CD4-positive, alpha-beta T cell (primary cell): ENCODE measurements at regions of chr5 and their contacts with region 1.

Region 1: GRCh38 chr5:96934708-96935558 is 947 bp upstream of the LNPEP start:
- DNase-seq: peak; percentile 86 to 98 (median 94)
- ATAC-seq: peak; percentile 63
- H3K4me3 ChIP-seq: peak overlapping the region; percentile 74
- H3K4me3 Mint-ChIP-seq: peak overlapping the region; percentile 94
- H3K27ac ChIP-seq: peak overlapping the region; percentile 83 to 94
- H3K27ac Mint-ChIP-seq: peak overlapping the region; percentile 96
- H3K4me1 ChIP-seq: peaks cover 32% of the 10 kb centered on the region
- H3K4me1 Mint-ChIP-seq: peaks cover 73% of the 10 kb centered on the region
- H3K27me3 ChIP-seq: no peaks in the 10 kb centered on the region
- H3K27me3 Mint-ChIP-seq: no peaks in the 10 kb centered on the region
- CTCF ChIP-seq: no peak

Region 2: GRCh38 chr5:96876292-96876850 is 58.6 kb before region 1 on chr5 and contains the start of gene ERAP2:
- CTCF ChIA-PET with region 1: interaction called, 6 read pairs
- POLR2A ChIA-PET with region 1: interaction called, 39 read pairs
- intact Hi-C with region 1: loop called (anchors 2 kb)
- DNase-seq: peak in 5 of 14 experiments; percentile 13 to 81 (median 75)
- ATAC-seq: peak; percentile 77
- H3K4me3 ChIP-seq: peak within 1 kb of the TSS; percentile 91
- H3K4me3 Mint-ChIP-seq: peak within 1 kb of the TSS; percentile 98
- H3K27ac ChIP-seq: peak within 1 kb of the TSS; percentile 83 to 90
- H3K27ac Mint-ChIP-seq: peak within 1 kb of the TSS; percentile 92
- H3K4me1 ChIP-seq: peaks cover 46% of the 10 kb centered on the region
- H3K4me1 Mint-ChIP-seq: peaks cover 81% of the 10 kb centered on the region
- H3K27me3 ChIP-seq: no peaks in the 10 kb centered on the region
- H3K27me3 Mint-ChIP-seq: no peaks in the 10 kb centered on the region
- CTCF ChIP-seq: no peak
- total RNA-seq, gene ERAP2: 56.6 to 61.4 TPM

Region 3: DNA sequence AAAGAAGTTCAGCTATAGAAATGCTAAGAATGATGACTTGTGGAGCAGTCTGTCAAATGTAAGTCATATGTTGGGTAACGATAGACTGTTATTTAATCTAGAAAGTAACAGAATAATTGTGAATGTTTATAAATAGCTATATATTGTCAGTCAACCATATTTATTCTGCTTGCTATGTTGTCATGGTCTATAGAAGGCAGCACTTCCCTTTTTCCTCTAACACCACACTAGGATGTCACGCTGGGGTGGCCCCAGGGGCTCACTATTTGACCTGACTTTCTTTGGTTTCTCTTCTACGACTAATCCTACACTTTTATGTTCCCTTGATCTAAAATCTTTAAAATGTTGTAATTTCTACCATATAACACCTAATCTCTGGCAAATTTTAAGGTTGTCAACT is 38.1 kb before region 1 on chr5:
- CTCF ChIA-PET with region 1: interaction called, 3 read pairs
- POLR2A ChIA-PET with region 1: interaction called, 19 read pairs
- intact Hi-C with region 1: loop called in 1 of 2 experiments (anchors 5 kb)
- DNase-seq: peak in 3 of 14 experiments; percentile 41 to 52 (median 46)
- ATAC-seq: peak; percentile 32
- H3K4me3 ChIP-seq: peak overlapping the region; percentile 33
- H3K4me3 Mint-ChIP-seq: peak overlapping the region; percentile 83
- H3K27ac ChIP-seq: peak overlapping the region; percentile 78 to 79
- H3K27ac Mint-ChIP-seq: peak overlapping the region; percentile 91
- H3K4me1 ChIP-seq: peaks cover 8% of the 10 kb centered on the region
- H3K4me1 Mint-ChIP-seq: peaks cover 53% of the 10 kb centered on the region
- H3K27me3 ChIP-seq: no peaks in the 10 kb centered on the region
- H3K27me3 Mint-ChIP-seq: no peaks in the 10 kb centered on the region
- CTCF ChIP-seq: no peak

Region 4: DNA sequence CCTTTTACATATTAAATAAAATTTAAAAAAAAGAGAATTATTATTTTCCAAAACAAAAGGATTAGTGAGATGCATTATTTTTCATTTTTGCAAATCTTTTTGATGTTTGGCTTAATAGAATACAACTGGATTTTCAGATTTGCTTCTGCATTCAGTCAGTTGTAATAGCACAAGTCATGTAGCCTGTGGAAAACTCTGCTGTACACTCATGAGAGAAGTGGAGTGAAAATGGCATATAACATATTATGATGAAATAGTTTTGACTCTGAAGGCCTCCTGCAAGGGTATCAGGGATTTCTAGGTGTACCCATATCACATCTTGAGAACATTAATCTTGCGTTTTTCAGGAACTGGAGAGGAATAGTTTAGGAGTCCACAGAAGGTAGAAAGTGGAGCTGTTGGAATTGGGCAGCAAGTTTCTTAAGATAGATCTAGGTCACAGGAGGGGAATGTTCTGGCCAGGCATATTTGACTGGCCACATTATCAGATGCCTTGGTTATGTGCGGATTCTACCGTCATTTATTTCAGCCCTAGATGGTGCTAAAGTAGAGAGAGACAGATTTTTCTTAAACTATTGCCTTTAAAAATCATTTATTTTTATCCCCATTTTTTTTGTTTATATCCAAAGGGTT is 17.3 kb after region 1 on chr5:
- CTCF ChIA-PET with region 1: interaction called, 4 read pairs
- POLR2A ChIA-PET with region 1: interaction called, 23 read pairs
- intact Hi-C with region 1: loop called in 1 of 2 experiments (anchors 1 kb)
- DNase-seq: no peak
- ATAC-seq: no peak
- H3K4me3 ChIP-seq: no peak overlapping the region
- H3K4me3 Mint-ChIP-seq: no peak overlapping the region
- H3K27ac ChIP-seq: no peak overlapping the region
- H3K27ac Mint-ChIP-seq: peak overlapping the region; percentile 66
- H3K4me1 ChIP-seq: peaks cover 19% of the 10 kb centered on the region
- H3K4me1 Mint-ChIP-seq: peaks cover 76% of the 10 kb centered on the region
- H3K27me3 ChIP-seq: no peaks in the 10 kb centered on the region
- H3K27me3 Mint-ChIP-seq: no peaks in the 10 kb centered on the region
- CTCF ChIP-seq: no peak

Region 5: DNA sequence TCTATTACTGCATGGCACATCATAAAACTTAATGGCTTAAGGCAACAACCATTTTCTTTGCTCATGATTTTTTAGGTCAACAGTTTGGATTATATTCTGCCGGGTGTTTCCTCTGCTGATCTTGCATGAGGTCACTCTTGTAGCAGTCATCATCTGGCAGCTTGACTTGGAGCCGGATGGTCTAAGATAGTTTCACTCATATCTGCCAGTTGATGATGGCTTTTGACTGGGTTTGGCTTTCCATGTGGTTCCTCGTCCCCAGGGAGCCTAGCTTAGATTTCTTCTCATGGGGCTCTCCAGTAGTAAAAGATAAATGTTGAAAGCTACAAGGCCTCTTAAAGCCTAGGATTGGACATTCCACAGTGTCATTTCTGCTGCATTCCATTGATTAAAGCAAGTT is 28.3 kb after region 1 on chr5:
- CTCF ChIA-PET with region 1: interaction called, 7 read pairs
- POLR2A ChIA-PET with region 1: interaction called, 59 read pairs
- intact Hi-C with region 1: loop called in 1 of 2 experiments (anchors 1 kb)
- DNase-seq: peak in 4 of 14 experiments; percentile 32 to 54 (median 40)
- ATAC-seq: peak; percentile 32
- H3K4me3 ChIP-seq: no peak overlapping the region
- H3K4me3 Mint-ChIP-seq: peak overlapping the region; percentile 81
- H3K27ac ChIP-seq: peak overlapping the region; percentile 68 to 70
- H3K27ac Mint-ChIP-seq: peak overlapping the region; percentile 91
- H3K4me1 ChIP-seq: peaks cover 38% of the 10 kb centered on the region
- H3K4me1 Mint-ChIP-seq: peaks cover 94% of the 10 kb centered on the region
- H3K27me3 ChIP-seq: no peaks in the 10 kb centered on the region
- H3K27me3 Mint-ChIP-seq: no peaks in the 10 kb centered on the region
- CTCF ChIP-seq: no peak

Region 6: GRCh38 chr5:96984506-96985192 is 49.7 kb after region 1 on chr5:
- CTCF ChIA-PET with region 1: interaction called, 4 read pairs
- POLR2A ChIA-PET with region 1: interaction called, 23 read pairs
- intact Hi-C with region 1: loop called in 1 of 2 experiments (anchors 5 kb)
- DNase-seq: no peak
- ATAC-seq: no peak
- H3K4me3 ChIP-seq: no peak overlapping the region
- H3K4me3 Mint-ChIP-seq: no peak overlapping the region
- H3K27ac ChIP-seq: no peak overlapping the region
- H3K27ac Mint-ChIP-seq: no peak overlapping the region
- H3K4me1 ChIP-seq: peaks cover 3% of the 10 kb centered on the region
- H3K4me1 Mint-ChIP-seq: peaks cover 55% of the 10 kb centered on the region
- H3K27me3 ChIP-seq: no peaks in the 10 kb centered on the region
- H3K27me3 Mint-ChIP-seq: no peaks in the 10 kb centered on the region
- CTCF ChIP-seq: no peak

Region 7: DNA sequence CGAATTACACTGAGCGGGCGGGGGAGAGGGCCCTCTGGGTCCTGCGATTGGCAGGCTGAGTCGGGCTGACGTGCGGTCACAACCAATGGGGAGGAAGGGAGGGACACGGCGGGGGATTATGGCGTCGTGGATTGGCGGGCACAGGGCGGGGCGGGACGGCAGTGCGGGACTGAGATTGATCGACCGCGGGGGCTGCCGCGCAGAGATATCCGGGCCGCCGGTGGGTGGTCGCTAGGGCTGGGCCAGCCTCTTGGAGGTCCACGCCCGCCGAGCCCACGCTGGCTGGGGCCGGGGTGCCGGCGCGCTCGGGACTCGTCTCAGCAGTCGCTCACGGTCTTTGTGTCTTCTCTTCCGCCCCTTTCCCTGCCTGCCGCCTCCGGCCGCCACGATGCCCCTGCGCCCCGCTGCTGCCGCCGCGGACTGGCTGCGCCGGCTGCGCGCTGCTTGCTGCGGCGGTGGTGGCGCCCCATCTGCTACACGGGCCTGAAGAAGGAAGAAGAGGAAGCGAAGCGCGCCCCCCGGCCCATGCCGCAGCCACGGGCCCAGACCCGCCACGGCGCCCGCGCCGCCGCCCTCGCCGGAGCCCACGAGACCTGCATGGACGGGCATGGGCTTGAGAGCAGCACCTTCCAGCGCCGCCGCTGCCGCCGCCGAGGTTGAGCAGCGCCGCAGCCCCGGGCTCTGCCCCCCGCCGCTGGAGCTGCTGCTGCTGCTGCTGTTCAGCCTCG is 1838.7 kb after region 1 on chr5 and contains the start of gene RGMB:
- CTCF ChIA-PET with region 1: no interaction called
- POLR2A ChIA-PET with region 1: no interaction called
- intact Hi-C with region 1: loop called in 1 of 2 experiments (anchors 10 kb)
- DNase-seq: peak; percentile 79 to 94 (median 88)
- ATAC-seq: peak; percentile 85
- H3K4me3 ChIP-seq: peak within 1 kb of the TSS; percentile 74
- H3K4me3 Mint-ChIP-seq: peak within 1 kb of the TSS; percentile 99
- H3K27ac ChIP-seq: peak within 1 kb of the TSS; percentile 10 to 61
- H3K27ac Mint-ChIP-seq: peak within 1 kb of the TSS; percentile 87
- H3K4me1 ChIP-seq: peaks cover 45% of the 10 kb centered on the region
- H3K4me1 Mint-ChIP-seq: peaks cover 72% of the 10 kb centered on the region
- H3K27me3 ChIP-seq: peaks cover 0 to 12% of the 10 kb centered on the region in 2 experiments
- H3K27me3 Mint-ChIP-seq: peaks cover 14% of the 10 kb centered on the region
- CTCF ChIP-seq: no peak
- total RNA-seq, gene RGMB: 15.8 to 15.9 TPM